ENCODE measurements at regions of chr2 and their contacts with region 1.

Region 1: GRCh38 chr2:126864861-126865260 is 33.8 kb upstream of the TEX51 start:
- DNase-seq: peak in 1 of 2 experiments; percentile 76
- H3K4me3 ChIP-seq: no peak overlapping the region
- H3K27ac ChIP-seq: no peak overlapping the region
- H3K4me1 ChIP-seq: no peaks in the 10 kb centered on the region; a peak in 1 of 7 replicates
- H3K27me3 ChIP-seq: no peaks in the 10 kb centered on the region
- CTCF ChIP-seq: peak; percentile 58 to 79 (median 69)
- EP300 ChIP-seq: no peak
- POLR2A ChIP-seq: no peak
- RAD21 ChIP-seq: peak; percentile 46 to 66

Region 2: DNA sequence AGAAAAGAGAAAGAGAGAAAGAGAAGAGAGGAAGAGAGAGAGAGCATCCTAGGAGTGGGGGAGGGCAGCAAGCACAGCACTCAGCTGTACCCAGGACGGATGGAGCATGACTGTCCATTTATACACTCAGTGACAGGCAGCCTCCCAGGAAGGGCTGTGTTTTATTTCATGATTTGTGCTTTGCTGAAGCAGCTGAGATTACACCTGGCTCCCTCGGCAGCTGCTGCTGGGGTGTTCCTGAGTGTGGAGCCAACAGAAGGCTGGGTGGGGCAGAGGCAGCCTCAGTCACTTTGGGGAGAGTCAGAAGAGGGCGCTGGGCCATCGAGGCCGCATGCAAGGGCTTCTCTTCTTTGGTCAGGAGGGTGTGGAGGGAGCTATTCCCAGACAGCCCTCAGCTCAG is 13.9 kb before region 1 on chr2:
- CTCF ChIA-PET with region 1: interaction called, 14 read pairs
- POLR2A ChIA-PET with region 1: no interaction called
- DNase-seq: no peak
- H3K4me3 ChIP-seq: no peak overlapping the region
- H3K27ac ChIP-seq: no peak overlapping the region
- H3K4me1 ChIP-seq: no peaks in the 10 kb centered on the region
- H3K27me3 ChIP-seq: no peaks in the 10 kb centered on the region; a peak in 1 of 7 replicates
- CTCF ChIP-seq: no peak
- EP300 ChIP-seq: no peak
- POLR2A ChIP-seq: no peak
- RAD21 ChIP-seq: peak in 1 of 2 experiments; percentile 11; a peak in 1 of 4 replicates

Region 3: DNA sequence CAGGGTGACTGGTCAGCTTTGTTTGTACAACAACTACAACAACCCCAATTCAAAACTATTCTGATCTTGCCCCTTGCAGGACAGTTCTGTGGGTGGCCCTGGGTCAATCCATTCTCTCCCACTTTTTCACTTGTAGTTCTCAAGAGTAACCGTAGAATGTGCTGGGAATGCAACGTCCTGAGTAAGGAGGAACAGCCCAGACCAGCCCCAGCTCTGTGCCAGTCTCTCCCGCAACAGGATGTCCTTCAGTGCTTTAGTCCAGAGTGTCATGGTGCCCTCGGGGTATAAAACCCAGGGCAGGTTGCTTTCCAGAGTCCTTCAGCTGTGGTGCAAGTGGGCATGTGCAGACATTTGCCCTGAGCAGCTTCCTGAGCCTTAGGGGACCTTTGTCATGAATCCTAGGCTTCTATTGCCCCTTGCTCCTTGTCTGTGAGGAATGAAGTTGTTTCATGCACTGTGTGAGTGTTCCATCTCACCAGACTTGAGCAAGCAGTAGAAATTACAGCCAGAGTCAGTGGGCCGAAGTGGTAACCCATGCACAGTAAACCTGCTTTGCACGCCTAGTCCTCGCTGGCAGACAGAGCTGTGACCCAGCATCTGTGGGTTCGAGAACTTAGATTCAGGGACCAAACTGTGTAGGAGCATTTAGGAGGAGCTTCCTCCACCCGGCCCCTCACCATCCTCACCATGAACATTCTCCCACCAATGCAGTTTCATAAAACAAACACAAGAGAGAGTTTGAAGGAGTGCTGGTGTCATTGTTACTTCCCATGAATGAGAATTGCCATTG is 12.0 kb after region 1 on chr2:
- CTCF ChIA-PET with region 1: interaction called, 12 read pairs
- POLR2A ChIA-PET with region 1: no interaction called
- DNase-seq: no peak
- H3K4me3 ChIP-seq: no peak overlapping the region; a peak in 1 of 8 replicates
- H3K27ac ChIP-seq: no peak overlapping the region
- H3K4me1 ChIP-seq: peaks cover 0 to 11% (median 5%) of the 10 kb centered on the region in 4 experiments; a peak in 5 of 7 replicates
- H3K27me3 ChIP-seq: no peaks in the 10 kb centered on the region
- CTCF ChIP-seq: no peak
- EP300 ChIP-seq: no peak
- POLR2A ChIP-seq: no peak
- RAD21 ChIP-seq: no peak

Region 4: GRCh38 chr2:126895336-126895735 is 30.5 kb after region 1 on chr2:
- CTCF ChIA-PET with region 1: no interaction called
- POLR2A ChIA-PET with region 1: no interaction called
- DNase-seq: no peak
- H3K4me3 ChIP-seq: no peak overlapping the region
- H3K27ac ChIP-seq: no peak overlapping the region
- H3K4me1 ChIP-seq: no peaks in the 10 kb centered on the region
- H3K27me3 ChIP-seq: no peaks in the 10 kb centered on the region
- CTCF ChIP-seq: no peak
- EP300 ChIP-seq: no peak
- POLR2A ChIP-seq: no peak
- RAD21 ChIP-seq: no peak

Region 5: DNA sequence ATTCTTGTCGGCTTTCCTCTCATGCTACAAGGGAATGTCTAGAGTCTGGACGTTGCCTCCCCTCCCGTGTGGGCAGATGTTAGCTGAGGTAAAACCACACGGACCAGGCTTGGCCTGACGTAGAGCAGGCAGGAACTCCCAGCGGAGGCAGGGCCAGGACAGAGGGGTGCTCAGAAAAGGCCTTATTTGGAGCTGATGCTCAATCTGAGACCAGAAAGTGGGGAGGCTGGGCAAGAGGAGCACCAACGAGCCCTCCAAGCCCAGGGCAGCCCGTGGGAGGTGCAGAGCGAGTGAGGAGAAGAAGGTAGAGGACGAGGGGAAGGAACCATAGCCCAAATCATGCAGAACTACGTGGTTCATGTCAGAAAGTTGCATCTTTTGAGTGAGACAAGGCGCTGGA is 42.8 kb after region 1 on chr2:
- CTCF ChIA-PET with region 1: no interaction called
- POLR2A ChIA-PET with region 1: no interaction called
- DNase-seq: peak in 1 of 2 experiments; percentile 37
- H3K4me3 ChIP-seq: no peak overlapping the region
- H3K27ac ChIP-seq: no peak overlapping the region
- H3K4me1 ChIP-seq: no peaks in the 10 kb centered on the region; a peak in 2 of 7 replicates
- H3K27me3 ChIP-seq: no peaks in the 10 kb centered on the region
- CTCF ChIP-seq: no peak
- EP300 ChIP-seq: no peak
- POLR2A ChIP-seq: no peak
- RAD21 ChIP-seq: no peak

Region 6: DNA sequence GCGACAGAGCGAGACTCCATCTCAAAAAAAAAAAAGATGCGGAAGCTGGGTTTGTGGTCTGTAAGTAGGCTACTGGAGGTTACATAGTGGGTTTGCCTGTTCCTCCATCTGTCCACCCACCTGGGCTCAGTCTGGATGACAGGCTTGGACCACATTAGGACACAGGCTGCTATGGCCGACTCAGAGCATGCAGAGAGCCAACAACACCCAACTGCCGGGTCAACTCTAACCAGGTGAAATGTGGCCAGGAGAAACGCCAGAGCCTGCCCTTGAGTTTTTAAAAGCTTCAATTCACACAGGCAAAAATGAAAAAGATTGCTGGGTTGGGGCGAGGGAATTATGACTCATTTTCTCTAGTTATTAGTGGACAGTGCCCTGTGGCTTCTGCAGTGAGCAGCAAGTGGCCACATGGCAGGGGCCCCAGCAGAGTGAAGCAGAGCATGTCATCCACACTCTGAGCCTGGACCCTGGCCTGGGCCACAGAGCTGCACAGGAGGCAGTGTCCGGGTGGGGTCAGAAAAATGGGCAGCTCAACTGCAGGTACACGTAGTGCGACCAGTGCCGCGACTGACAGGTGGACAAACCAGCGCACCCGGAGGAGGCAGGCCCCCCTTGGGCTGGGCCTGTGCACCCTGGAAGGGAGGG is 174.6 kb after region 1 on chr2:
- CTCF ChIA-PET with region 1: no interaction called
- POLR2A ChIA-PET with region 1: no interaction called
- DNase-seq: no peak
- H3K4me3 ChIP-seq: no peak overlapping the region
- H3K27ac ChIP-seq: no peak overlapping the region
- H3K4me1 ChIP-seq: peaks cover 0 to 6% (median 0%) of the 10 kb centered on the region in 4 experiments; a peak in 3 of 7 replicates
- H3K27me3 ChIP-seq: no peaks in the 10 kb centered on the region
- CTCF ChIP-seq: no peak
- EP300 ChIP-seq: no peak
- POLR2A ChIP-seq: no peak
- RAD21 ChIP-seq: no peak

Measured in H1 (cell line).